ENCODE measurements at regions of chr19 and their contacts with region 1.

Region 1: DNA sequence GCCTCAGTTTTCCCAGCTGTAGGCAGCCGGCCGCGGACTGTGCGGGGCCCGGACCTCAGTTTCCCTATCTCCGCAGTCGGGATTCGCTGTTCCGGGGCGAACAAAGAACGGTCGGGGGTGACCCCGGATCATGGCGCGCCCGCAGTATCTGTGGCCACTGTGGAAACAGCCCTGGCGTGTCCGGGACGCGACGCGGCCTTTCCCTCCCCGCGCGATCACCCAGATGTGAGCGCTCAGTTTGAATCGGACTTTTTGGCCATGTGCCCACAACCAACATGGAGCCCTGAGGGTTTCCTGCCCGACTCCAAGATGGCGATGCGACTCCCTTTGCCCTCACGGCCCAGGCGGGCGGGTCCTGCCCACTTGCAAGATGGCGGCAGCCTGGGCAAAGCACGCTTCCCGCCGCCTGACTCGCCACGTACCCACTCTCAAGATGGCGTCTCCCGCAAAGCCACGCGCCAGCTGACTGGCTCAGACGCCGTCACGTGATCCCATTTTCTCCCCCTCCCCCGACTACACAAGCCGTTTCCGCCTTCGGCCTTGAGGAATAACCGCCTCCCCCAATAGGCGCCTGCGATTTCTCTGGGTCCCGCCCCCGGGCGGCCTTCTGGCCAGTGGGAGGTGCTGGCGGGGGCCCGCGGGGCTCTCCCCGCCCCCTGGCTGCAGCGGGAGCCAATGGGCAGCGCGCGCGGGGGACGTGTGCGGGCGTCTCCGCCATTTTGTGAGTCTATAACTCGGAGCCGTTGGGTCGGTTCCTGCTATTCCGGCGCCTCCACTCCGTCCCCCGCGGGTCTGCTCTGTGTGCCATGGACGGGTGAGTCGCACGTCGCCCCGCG is at the start of gene PTBP1:
- DNase-seq: peak; percentile 94 to 100 (median 100)
- ATAC-seq: peak; percentile 91
- H3K4me3 ChIP-seq: peak within 1 kb of the TSS; percentile 78
- H3K4me3 Mint-ChIP-seq: peak within 1 kb of the TSS; percentile 86 to 97 (median 94)
- H3K27ac ChIP-seq: peak within 1 kb of the TSS; percentile 78
- H3K27ac Mint-ChIP-seq: peak within 1 kb of the TSS; percentile 85 to 97 (median 92)
- H3K4me1 ChIP-seq: peaks cover 29 to 31% of the 10 kb centered on the region in 2 donors
- H3K4me1 Mint-ChIP-seq: peaks cover 26 to 36% (median 32%) of the 10 kb centered on the region in 7 donors
- H3K27me3 ChIP-seq: no peaks in the 10 kb centered on the region
- H3K27me3 Mint-ChIP-seq: peaks cover 0 to 2% (median 0%) of the 10 kb centered on the region in 5 donors
- total RNA-seq, gene PTBP1: 313 to 524 (median 326) TPM

Region 2: GRCh38 chr19:572140-572742 is 224.7 kb before region 1 on chr19 and contains the start of gene BSG:
- CTCF ChIA-PET with region 1: no interaction called
- POLR2A ChIA-PET with region 1: no interaction called
- intact Hi-C with region 1: loop called (anchors 1 kb)
- DNase-seq: peak; percentile 96 to 99 (median 99)
- ATAC-seq: peak; percentile 89
- H3K4me3 ChIP-seq: peak within 1 kb of the TSS; percentile 75
- H3K4me3 Mint-ChIP-seq: peak within 1 kb of the TSS; percentile 87 to 99 (median 96)
- H3K27ac ChIP-seq: peak within 1 kb of the TSS; percentile 93
- H3K27ac Mint-ChIP-seq: peak within 1 kb of the TSS; percentile 92 to 99 (median 96)
- H3K4me1 ChIP-seq: peaks cover 16 to 19% of the 10 kb centered on the region in 2 donors
- H3K4me1 Mint-ChIP-seq: peaks cover 12 to 49% (median 36%) of the 10 kb centered on the region in 7 donors
- H3K27me3 ChIP-seq: no peaks in the 10 kb centered on the region
- H3K27me3 Mint-ChIP-seq: peaks cover 0 to 4% (median 0%) of the 10 kb centered on the region in 5 donors
- total RNA-seq, gene BSG: 109 to 247 (median 120) TPM

Region 3: GRCh38 chr19:662962-663681 is 133.8 kb before region 1 on chr19 and contains the start of gene RNF126:
- CTCF ChIA-PET with region 1: no interaction called
- POLR2A ChIA-PET with region 1: interaction called, 3 read pairs
- intact Hi-C with region 1: loop called (anchors 1 kb)
- DNase-seq: peak; percentile 83 to 92 (median 88)
- ATAC-seq: peak; percentile 78
- H3K4me3 ChIP-seq: peak within 1 kb of the TSS; percentile 92
- H3K4me3 Mint-ChIP-seq: peak within 1 kb of the TSS; percentile 95 to 99 (median 98)
- H3K27ac ChIP-seq: peak within 1 kb of the TSS; percentile 96
- H3K27ac Mint-ChIP-seq: peak within 1 kb of the TSS; percentile 93 to 98 (median 97)
- H3K4me1 ChIP-seq: peaks cover 27 to 30% of the 10 kb centered on the region in 2 donors
- H3K4me1 Mint-ChIP-seq: peaks cover 20 to 40% (median 32%) of the 10 kb centered on the region in 7 donors
- H3K27me3 ChIP-seq: no peaks in the 10 kb centered on the region
- H3K27me3 Mint-ChIP-seq: peaks cover 0 to 2% (median 0%) of the 10 kb centered on the region in 5 donors
- total RNA-seq, gene RNF126: 75.1 to 110 (median 101) TPM

Region 4: GRCh38 chr19:835210-835810 is 38.4 kb after region 1 on chr19:
- CTCF ChIA-PET with region 1: no interaction called
- POLR2A ChIA-PET with region 1: no interaction called
- intact Hi-C with region 1: no loop called
- DNase-seq: no peak
- ATAC-seq: no peak
- H3K4me3 ChIP-seq: no peak overlapping the region
- H3K4me3 Mint-ChIP-seq: no peak overlapping the region
- H3K27ac ChIP-seq: no peak overlapping the region
- H3K27ac Mint-ChIP-seq: no peak overlapping the region
- H3K4me1 ChIP-seq: no peaks in the 10 kb centered on the region
- H3K4me1 Mint-ChIP-seq: peaks cover 0 to 8% (median 0%) of the 10 kb centered on the region in 7 donors
- H3K27me3 ChIP-seq: no peaks in the 10 kb centered on the region
- H3K27me3 Mint-ChIP-seq: peaks cover 4 to 24% (median 7%) of the 10 kb centered on the region in 5 donors

Region 5: GRCh38 chr19:860481-861101 is 63.7 kb after region 1 on chr19:
- CTCF ChIA-PET with region 1: interaction called, 3 read pairs
- POLR2A ChIA-PET with region 1: interaction called, 4 read pairs
- intact Hi-C with region 1: loop called (anchors 1 to 2 kb)
- DNase-seq: peak in 8 of 9 donors; percentile 46 to 69 (median 58)
- ATAC-seq: peak; percentile 55
- H3K4me3 ChIP-seq: no peak overlapping the region
- H3K4me3 Mint-ChIP-seq: peak overlapping the region in 6 of 10 donors; percentile 17 to 64 (median 46)
- H3K27ac ChIP-seq: no peak overlapping the region
- H3K27ac Mint-ChIP-seq: no peak overlapping the region
- H3K4me1 ChIP-seq: peaks cover 14 to 23% of the 10 kb centered on the region in 2 donors
- H3K4me1 Mint-ChIP-seq: peaks cover 0 to 21% (median 16%) of the 10 kb centered on the region in 7 donors
- H3K27me3 ChIP-seq: no peaks in the 10 kb centered on the region
- H3K27me3 Mint-ChIP-seq: peaks cover 0 to 18% (median 0%) of the 10 kb centered on the region in 5 donors

Region 6: GRCh38 chr19:913080-913748 is 116.3 kb after region 1 on chr19 and contains the start of gene R3HDM4:
- CTCF ChIA-PET with region 1: no interaction called
- POLR2A ChIA-PET with region 1: interaction called, 4 read pairs
- intact Hi-C with region 1: loop called (anchors 1 to 2 kb)
- DNase-seq: peak; percentile 75 to 92 (median 83)
- ATAC-seq: peak; percentile 75
- H3K4me3 ChIP-seq: peak within 1 kb of the TSS; percentile 93
- H3K4me3 Mint-ChIP-seq: peak within 1 kb of the TSS; percentile 72 to 92 (median 88)
- H3K27ac ChIP-seq: peak within 1 kb of the TSS; percentile 100
- H3K27ac Mint-ChIP-seq: peak within 1 kb of the TSS; percentile 83 to 97 (median 95)
- H3K4me1 ChIP-seq: peaks cover 25 to 27% of the 10 kb centered on the region in 2 donors
- H3K4me1 Mint-ChIP-seq: peaks cover 19 to 54% (median 35%) of the 10 kb centered on the region in 7 donors
- H3K27me3 ChIP-seq: no peaks in the 10 kb centered on the region
- H3K27me3 Mint-ChIP-seq: peaks cover 0 to 2% (median 0%) of the 10 kb centered on the region in 5 donors
- total RNA-seq, gene R3HDM4: 123 to 219 (median 184) TPM

Region 7: GRCh38 chr19:940591-941291 is 143.8 kb after region 1 on chr19:
- CTCF ChIA-PET with region 1: no interaction called
- POLR2A ChIA-PET with region 1: no interaction called
- intact Hi-C with region 1: no loop called
- DNase-seq: peak; percentile 40 to 63 (median 59)
- ATAC-seq: peak; percentile 85
- H3K4me3 ChIP-seq: peak overlapping the region; percentile 59
- H3K4me3 Mint-ChIP-seq: peak overlapping the region; percentile 77 to 92 (median 84)
- H3K27ac ChIP-seq: peak overlapping the region; percentile 47
- H3K27ac Mint-ChIP-seq: peak overlapping the region in 7 of 9 donors; percentile 56 to 94 (median 82)
- H3K4me1 ChIP-seq: peaks cover 14 to 20% of the 10 kb centered on the region in 2 donors
- H3K4me1 Mint-ChIP-seq: peaks cover 21 to 42% (median 29%) of the 10 kb centered on the region in 7 donors
- H3K27me3 ChIP-seq: no peaks in the 10 kb centered on the region
- H3K27me3 Mint-ChIP-seq: peaks cover 0 to 7% (median 0%) of the 10 kb centered on the region in 5 donors

Region 8: GRCh38 chr19:1249298-1249989 is 452.5 kb after region 1 on chr19:
- CTCF ChIA-PET with region 1: no interaction called
- POLR2A ChIA-PET with region 1: no interaction called
- intact Hi-C with region 1: loop called (anchors 1 to 10 kb)
- DNase-seq: peak; percentile 88 to 97 (median 94)
- ATAC-seq: peak; percentile 74
- H3K4me3 ChIP-seq: peak overlapping the region; percentile 63
- H3K4me3 Mint-ChIP-seq: peak overlapping the region; percentile 80 to 95 (median 88)
- H3K27ac ChIP-seq: peak overlapping the region; percentile 94
- H3K27ac Mint-ChIP-seq: peak overlapping the region; percentile 62 to 95 (median 89)
- H3K4me1 ChIP-seq: peaks cover 22 to 27% of the 10 kb centered on the region in 2 donors
- H3K4me1 Mint-ChIP-seq: peaks cover 0 to 11% (median 10%) of the 10 kb centered on the region in 7 donors
- H3K27me3 ChIP-seq: no peaks in the 10 kb centered on the region
- H3K27me3 Mint-ChIP-seq: no peaks in the 10 kb centered on the region

Region 9: DNA sequence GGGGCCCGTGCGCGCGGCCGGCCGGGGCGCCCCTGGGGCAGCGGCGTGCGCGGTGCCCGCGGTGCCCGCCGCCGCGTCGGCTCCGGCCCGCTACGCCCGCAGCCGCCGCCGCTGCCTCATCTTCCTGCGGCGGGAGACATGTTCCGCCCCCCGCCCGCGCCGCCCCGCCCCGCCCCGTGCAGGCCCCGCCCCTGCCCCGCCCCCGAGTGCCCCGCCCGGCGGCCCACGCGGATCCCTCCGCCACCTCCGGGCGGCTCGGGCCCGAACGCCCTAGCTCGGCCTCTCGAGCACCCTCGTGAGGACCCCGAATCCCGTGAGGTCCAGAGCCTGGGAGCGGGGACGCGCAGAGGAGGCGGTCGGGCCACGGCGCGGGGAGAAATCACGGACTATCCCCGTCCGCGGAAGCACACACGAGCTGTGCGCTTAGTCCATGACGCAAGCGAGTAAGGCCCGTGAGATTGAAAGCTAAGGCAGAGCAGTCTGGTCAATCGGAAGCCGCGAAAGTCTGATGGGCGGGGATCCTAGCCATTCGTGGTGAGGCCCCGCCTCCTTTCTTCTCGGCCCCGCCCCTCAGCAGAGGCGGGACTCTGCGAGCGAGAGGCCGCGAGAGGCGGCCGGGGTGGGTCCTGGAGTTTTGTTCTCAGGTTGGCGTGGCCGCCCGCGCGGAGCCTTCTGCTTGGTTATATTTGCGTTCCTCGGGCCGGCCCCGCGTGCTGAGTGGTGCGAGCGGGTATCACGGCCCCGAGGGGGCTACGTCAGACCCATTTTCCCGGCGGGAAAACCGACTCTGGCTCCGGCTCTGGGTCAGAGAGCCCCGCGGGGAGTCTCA is 855.8 kb after region 1 on chr19 and contains the start of gene TCF3:
- CTCF ChIA-PET with region 1: no interaction called
- POLR2A ChIA-PET with region 1: no interaction called
- intact Hi-C with region 1: loop called in 1 of 2 experiments (anchors 5 kb)
- DNase-seq: peak; percentile 96 to 100 (median 99)
- ATAC-seq: peak; percentile 96
- H3K4me3 ChIP-seq: peak within 1 kb of the TSS; percentile 86
- H3K4me3 Mint-ChIP-seq: peak within 1 kb of the TSS; percentile 86 to 96 (median 91)
- H3K27ac ChIP-seq: peak within 1 kb of the TSS; percentile 99
- H3K27ac Mint-ChIP-seq: peak within 1 kb of the TSS; percentile 87 to 98 (median 95)
- H3K4me1 ChIP-seq: peaks cover 4 to 8% of the 10 kb centered on the region in 2 donors
- H3K4me1 Mint-ChIP-seq: peaks cover 7 to 14% (median 10%) of the 10 kb centered on the region in 7 donors
- H3K27me3 ChIP-seq: no peaks in the 10 kb centered on the region
- H3K27me3 Mint-ChIP-seq: peaks cover 0 to 4% (median 0%) of the 10 kb centered on the region in 5 donors
- total RNA-seq, gene TCF3: 66.6 to 83.6 (median 78.3) TPM

Measured in naive thymus-derived CD4-positive, alpha-beta T cell (primary cell).